ENCODE measurements at regions of chr1 and their contacts with region 1.

Region 1: DNA sequence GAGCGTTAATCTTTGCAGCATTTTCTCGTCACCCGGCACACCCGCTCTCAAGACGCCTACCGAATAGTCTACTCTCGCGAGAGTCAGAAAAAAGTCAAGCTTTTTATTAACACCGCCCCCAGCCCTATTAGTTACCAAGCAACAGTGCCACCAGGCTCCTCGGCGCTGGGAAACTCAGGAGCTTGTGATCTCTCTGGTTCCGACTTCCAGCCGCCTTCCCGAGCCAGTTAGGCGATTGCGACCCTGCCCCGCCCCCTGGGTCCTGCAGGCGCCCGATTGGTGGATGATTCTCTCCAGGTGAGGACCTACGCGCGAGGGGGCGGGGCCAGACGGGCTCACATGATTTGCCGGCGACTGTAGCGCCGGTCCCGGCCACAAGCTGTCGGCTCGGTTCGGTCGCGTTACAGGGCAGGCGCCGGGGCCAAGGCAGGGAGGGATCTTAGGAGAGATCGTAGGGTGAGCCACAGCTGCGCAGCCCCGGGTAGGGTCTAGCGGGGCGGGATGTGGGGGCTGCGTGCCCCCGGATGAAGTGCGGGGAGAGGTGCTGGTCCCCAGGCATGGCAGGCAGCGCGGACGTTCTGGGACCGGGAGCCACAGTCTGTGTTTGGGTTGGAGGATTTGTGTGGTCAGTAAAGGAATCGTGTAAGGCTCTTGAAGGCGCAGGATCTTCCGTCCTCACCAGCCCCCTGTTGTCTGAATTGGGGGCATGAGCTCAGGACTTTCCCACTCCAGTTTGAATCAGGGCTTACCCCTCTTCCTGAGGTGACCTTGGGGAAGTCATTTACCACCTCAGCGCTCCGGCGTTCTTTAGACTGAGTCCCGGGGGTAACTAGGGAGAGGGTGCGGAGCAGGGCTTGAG is at the start of gene PFKFB2:
- DNase-seq: peak; percentile 97 to 98
- H3K4me3 ChIP-seq: peak within 1 kb of the TSS; percentile 71 to 80
- H3K27ac ChIP-seq: peak within 1 kb of the TSS; percentile 90 to 92
- H3K4me1 ChIP-seq: peaks cover 9 to 14% of the 10 kb centered on the region in 2 donors
- H3K27me3 ChIP-seq: no peaks in the 10 kb centered on the region
- CTCF ChIP-seq: peak; percentile 31 to 36 (median 35)
- total RNA-seq, gene PFKFB2: 1.2 TPM

Region 2: GRCh38 chr1:206507284-206508129 is 545.6 kb before region 1 on chr1 and contains the start of gene RASSF5:
- intact Hi-C with region 1: loop called (anchors 10 kb)
- DNase-seq: peak; percentile 72 to 94
- H3K4me3 ChIP-seq: peak within 1 kb of the TSS; percentile 96 to 98
- H3K27ac ChIP-seq: peak within 1 kb of the TSS; percentile 65 to 75
- H3K4me1 ChIP-seq: peaks cover 8 to 44% of the 10 kb centered on the region in 2 donors
- H3K27me3 ChIP-seq: no peaks in the 10 kb centered on the region
- CTCF ChIP-seq: no peak
- total RNA-seq, gene RASSF5: 8.9 TPM

Region 3: DNA sequence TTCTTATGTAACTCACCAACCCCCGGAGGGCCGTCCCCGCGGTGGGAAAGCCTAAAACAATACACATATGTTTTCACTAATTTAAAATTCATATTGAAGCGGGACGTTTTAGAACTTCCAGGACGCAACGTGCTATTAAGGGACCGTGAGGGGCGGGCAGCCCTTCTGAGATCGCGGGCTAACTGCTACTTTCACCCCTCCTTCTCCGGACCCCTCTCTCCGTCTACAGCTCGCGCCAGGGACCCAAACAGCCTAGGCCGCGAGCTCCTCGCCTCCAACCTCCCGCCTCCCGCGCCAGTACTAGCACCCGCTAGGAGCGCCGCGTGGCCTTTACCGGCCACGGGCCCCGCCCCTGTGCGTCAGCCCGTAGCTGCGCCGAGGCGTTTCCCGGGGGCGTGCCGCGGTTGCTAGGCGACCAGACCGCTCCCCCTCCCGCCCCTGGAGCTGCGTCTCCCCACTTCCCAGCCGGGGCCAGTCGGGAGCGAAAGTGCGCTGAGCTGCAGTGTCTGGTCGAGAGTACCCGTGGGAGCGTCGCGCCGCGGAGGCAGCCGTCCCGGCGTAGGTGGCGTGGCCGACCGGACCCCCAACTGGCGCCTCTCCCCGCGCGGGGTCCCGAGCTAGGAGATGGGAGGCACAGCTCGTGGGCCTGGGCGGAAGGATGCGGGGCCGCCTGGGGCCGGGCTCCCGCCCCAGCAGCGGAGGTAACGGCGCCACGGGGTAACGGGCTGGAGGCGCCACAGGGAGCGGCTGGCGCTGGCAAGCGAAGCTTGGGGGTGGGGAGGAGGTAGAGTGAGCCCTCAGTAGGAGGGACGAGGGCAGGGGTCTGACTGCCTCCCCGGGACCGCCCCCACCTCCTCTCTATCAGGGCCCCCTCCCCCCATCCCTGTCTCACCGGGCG is 417.8 kb before region 1 on chr1 and contains the start of gene DYRK3:
- intact Hi-C with region 1: loop called (anchors 2 kb)
- DNase-seq: peak; percentile 71 to 96
- H3K4me3 ChIP-seq: peak within 1 kb of the TSS; percentile 80 to 83
- H3K27ac ChIP-seq: peak within 1 kb of the TSS; percentile 77 to 79
- H3K4me1 ChIP-seq: peaks cover 0 to 22% of the 10 kb centered on the region in 2 donors
- H3K27me3 ChIP-seq: no peaks in the 10 kb centered on the region
- CTCF ChIP-seq: no peak
- total RNA-seq, gene DYRK3: 17.9 TPM

Region 4: DNA sequence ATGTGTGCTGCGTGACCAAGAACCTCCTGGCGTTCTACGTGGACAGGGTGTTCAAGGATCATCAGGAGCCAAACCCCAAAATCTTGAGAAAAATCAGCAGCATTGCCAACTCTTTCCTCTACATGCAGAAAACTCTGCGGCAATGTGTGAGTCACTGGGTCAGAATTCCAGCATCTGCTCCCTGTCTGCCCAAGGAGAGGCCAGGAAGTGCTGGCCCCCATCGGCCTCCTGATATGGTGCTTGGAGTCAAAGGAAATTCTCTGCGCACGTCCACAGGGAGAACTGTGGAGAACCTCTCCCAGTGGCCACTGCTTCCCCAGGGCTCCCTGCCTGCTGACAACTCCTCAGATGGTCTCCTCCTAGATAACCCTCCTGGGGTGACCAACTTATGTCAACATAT is 213.3 kb before region 1 on chr1:
- intact Hi-C with region 1: no loop called
- DNase-seq: peak in 1 of 2 donors; percentile 48
- H3K4me3 ChIP-seq: no peak overlapping the region
- H3K27ac ChIP-seq: no peak overlapping the region
- H3K4me1 ChIP-seq: no peaks in the 10 kb centered on the region
- H3K27me3 ChIP-seq: no peaks in the 10 kb centered on the region
- CTCF ChIP-seq: no peak

Region 5: DNA sequence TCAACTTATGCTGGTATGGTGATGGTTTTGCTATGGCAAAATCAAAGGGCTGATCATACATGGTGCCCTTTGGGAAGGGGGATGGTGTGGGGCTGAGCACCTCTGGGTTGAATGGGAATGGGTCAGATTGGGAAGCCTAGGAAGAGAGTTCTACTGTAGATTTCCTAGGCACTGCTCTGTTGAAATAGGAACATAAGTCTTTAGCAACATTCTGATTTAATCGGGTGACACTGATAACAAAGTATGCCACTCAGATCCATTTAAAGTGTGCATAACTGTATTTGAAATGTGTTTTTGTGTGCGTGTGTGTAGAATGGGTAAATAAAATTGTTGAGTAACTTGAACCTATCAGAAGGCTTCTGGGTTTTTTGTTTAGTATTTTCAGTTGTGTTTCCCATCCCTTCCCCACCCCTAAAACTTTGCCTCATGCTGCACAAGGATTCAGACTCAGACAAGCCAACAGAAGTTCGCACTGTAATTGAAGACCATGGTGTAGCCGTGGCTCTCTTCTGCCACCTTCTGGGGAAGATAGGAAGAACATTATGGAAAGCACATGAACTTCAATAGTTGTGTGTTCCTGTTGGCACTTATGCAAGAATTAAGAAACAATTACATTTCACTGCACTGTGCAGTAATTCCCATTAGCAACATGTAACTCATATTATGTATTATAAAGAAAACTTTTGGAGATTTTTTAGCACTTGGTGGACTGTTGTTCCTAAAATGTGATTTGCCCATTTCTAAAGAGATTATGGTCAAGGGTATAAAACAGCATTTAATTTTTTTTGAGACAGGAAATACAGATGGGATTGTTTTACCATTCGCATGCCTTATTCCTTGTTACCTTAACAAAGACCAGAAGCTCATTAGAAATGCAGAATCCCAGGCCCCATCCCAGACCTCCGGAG is 24.6 kb after region 1 on chr1:
- intact Hi-C with region 1: loop called (anchors 1 kb)
- DNase-seq: peak in 1 of 2 donors; percentile 81
- H3K4me3 ChIP-seq: no peak overlapping the region
- H3K27ac ChIP-seq: no peak overlapping the region
- H3K4me1 ChIP-seq: peaks cover 0 to 6% of the 10 kb centered on the region in 2 donors
- H3K27me3 ChIP-seq: no peaks in the 10 kb centered on the region
- CTCF ChIP-seq: peak; percentile 78 to 87 (median 80)

Region 6: DNA sequence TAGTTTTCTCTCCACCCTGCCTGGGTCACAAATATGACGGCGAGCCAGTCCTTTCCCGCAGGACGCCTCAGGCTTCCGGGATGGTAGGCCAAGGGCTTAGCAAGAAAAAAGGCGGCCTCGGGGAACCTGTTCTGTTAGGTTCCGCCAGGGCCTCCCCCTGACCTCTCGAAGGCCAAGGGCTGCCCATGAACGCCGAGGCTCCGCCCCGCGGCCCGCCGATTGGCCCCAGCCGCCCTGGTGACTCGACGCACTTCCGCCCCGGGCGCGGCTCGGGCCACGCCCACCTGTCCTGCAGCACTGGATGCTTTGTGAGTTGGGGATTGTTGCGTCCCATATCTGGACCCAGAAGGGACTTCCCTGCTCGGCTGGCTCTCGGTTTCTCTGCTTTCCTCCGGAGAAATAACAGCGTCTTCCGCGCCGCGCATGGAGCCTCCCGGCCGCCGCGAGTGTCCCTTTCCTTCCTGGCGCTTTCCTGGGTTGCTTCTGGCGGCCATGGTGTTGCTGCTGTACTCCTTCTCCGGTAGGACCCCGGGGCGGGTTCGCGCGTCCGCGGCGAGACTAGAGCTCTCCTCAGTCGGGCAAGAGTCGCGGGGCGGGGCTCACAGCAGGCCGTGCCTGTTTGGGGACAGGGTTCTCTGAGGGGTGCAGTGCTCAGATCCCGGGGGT is 698.8 kb after region 1 on chr1 and contains the start of gene CD46:
- intact Hi-C with region 1: loop called (anchors 5 kb)
- DNase-seq: peak; percentile 90 to 98
- H3K4me3 ChIP-seq: peak within 1 kb of the TSS; percentile 83 to 91
- H3K27ac ChIP-seq: peak within 1 kb of the TSS; percentile 84
- H3K4me1 ChIP-seq: peaks cover 0 to 18% of the 10 kb centered on the region in 2 donors
- H3K27me3 ChIP-seq: no peaks in the 10 kb centered on the region
- CTCF ChIP-seq: no peak
- total RNA-seq, gene CD46: 64.5 TPM

Measured in ascending aorta (tissue), 2 donors.